ENCODE measurements at regions of chr10 and their contacts with region 1.

Region 1: DNA sequence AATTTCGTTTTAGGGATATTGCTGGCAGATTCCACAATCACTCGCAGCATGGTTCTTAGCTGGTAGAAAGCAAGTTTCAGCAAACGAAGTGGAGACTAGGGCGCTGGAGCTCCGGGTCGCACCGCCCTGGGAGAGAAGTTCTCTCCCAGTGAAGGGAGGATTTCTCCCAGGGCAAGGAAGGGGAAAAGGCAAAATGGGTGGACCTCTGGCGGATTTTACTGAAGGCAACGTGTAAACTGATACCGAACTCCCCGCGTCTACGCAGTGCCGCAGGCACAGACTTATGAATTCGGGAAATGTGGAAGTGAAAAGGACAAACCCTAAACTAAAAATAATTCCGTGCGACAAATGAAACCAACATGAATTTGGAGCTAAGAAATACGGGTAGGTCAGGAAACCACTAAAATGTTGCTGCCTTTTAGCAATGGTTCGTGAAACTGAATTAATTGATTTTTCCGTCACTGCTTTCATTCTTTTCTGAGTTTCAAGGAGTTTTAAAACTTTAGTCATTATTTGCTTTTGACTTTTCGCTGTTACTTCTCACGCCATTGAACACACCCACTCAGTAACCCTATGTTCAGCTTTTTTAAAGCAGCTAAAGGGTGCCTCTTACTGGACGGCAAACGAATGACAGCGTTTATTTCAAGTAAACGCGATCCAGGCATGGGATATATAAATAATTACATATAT is at the start of gene MYOF:
- DNase-seq: peak; percentile 48 to 65
- ATAC-seq: peak; percentile 83 to 96 (median 90)
- H3K4me3 ChIP-seq: peak within 1 kb of the TSS; percentile 43 to 91 (median 66)
- H3K27ac ChIP-seq: peak within 1 kb of the TSS; percentile 38 to 94 (median 81)
- H3K4me1 ChIP-seq: peaks cover 0 to 37% (median 13%) of the 10 kb centered on the region in 9 donors
- H3K27me3 ChIP-seq: peaks cover 0 to 5% (median 0%) of the 10 kb centered on the region in 7 donors
- CTCF ChIP-seq: peak; percentile 38 to 75 (median 57)
- total RNA-seq, gene MYOF: 21.7 to 54.6 (median 41.6) TPM

Region 2: GRCh38 chr10:93180482-93180931 is 301.8 kb before region 1 on chr10:
- intact Hi-C with region 1: no loop called
- DNase-seq: peak; percentile 35 to 41
- ATAC-seq: peak; percentile 53 to 87 (median 73)
- H3K4me3 ChIP-seq: no peak overlapping the region
- H3K27ac ChIP-seq: peak overlapping the region in 2 of 10 donors; percentile 4 to 30
- H3K4me1 ChIP-seq: no peaks in the 10 kb centered on the region
- H3K27me3 ChIP-seq: peaks cover 0 to 3% (median 0%) of the 10 kb centered on the region in 7 donors
- CTCF ChIP-seq: no peak

Region 3: GRCh38 chr10:93420091-93420490 is 62.2 kb before region 1 on chr10:
- intact Hi-C with region 1: loop called in 1 of 10 experiments (anchors 5 kb)
- DNase-seq: peak in 1 of 2 donors; percentile 75
- ATAC-seq: peak; percentile 53 to 82 (median 70)
- H3K4me3 ChIP-seq: no peak overlapping the region
- H3K27ac ChIP-seq: peak overlapping the region; percentile 21 to 92 (median 73)
- H3K4me1 ChIP-seq: peaks cover 10 to 68% (median 47%) of the 10 kb centered on the region in 9 donors
- H3K27me3 ChIP-seq: no peaks in the 10 kb centered on the region
- CTCF ChIP-seq: no peak

Region 4: GRCh38 chr10:93437088-93437945 is 45.0 kb before region 1 on chr10:
- intact Hi-C with region 1: loop called in 4 of 10 experiments (anchors 5 kb)
- DNase-seq: peak; percentile 61 to 89
- ATAC-seq: peak; percentile 93 to 96 (median 96)
- H3K4me3 ChIP-seq: peak overlapping the region in 6 of 10 donors; percentile 8 to 27 (median 21)
- H3K27ac ChIP-seq: peak overlapping the region; percentile 88 to 99 (median 97)
- H3K4me1 ChIP-seq: peaks cover 18 to 82% (median 56%) of the 10 kb centered on the region in 9 donors
- H3K27me3 ChIP-seq: no peaks in the 10 kb centered on the region
- CTCF ChIP-seq: no peak

Measured in heart right ventricle (tissue), 16 donors.